Activated naive CD4-positive, alpha-beta T cell treated with anti-CD3 and anti-CD28 coated beads for 36 hours (primary cell): ENCODE measurements at regions of chr3 and their contacts with region 1.

Region 1: GRCh38 chr3:193788189-193788991 is 195.4 kb downstream of the OPA1 start:
- DNase-seq: peak; percentile 49
- H3K4me3 Mint-ChIP-seq: no peak overlapping the region
- H3K27ac Mint-ChIP-seq: no peak overlapping the region
- H3K4me1 Mint-ChIP-seq: no peaks in the 10 kb centered on the region
- H3K27me3 Mint-ChIP-seq: peaks cover 7% of the 10 kb centered on the region

Region 2: GRCh38 chr3:193389335-193389734 is 399.1 kb before region 1 on chr3:
- CTCF ChIA-PET with region 1: no interaction called
- intact Hi-C with region 1: no loop called
- DNase-seq: no peak
- H3K4me3 Mint-ChIP-seq: no peak overlapping the region
- H3K27ac Mint-ChIP-seq: no peak overlapping the region
- H3K4me1 Mint-ChIP-seq: no peaks in the 10 kb centered on the region
- H3K27me3 Mint-ChIP-seq: peaks cover 13% of the 10 kb centered on the region

Region 3: DNA sequence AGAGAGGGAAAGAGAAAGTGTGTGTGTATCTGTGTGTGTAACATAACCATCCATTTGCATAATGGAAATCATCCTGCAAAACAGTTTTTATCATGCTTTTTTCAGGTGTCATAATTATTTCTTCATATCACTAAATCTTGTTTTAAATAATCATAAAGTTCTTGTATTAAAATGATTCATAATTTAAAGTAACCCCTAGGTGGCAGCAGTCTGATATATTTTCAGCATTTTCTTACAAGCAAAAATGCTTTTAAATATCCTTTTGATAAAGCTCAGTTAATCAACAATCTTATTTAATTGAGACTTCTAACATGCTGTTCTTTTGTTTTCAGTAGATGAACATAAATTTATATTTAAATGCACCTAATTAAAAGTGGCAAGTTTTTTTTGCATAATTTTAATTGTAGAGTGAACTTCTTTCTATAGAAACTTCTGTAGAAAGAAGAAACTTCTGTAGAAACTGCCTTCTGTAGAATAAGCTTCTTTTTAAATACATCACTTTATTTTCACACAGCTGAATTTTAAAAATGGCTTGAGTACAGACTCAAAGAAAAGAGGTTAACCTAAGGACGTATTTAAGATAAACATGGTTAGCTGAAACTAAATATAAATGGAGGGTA is 122.9 kb before region 1 on chr3:
- CTCF ChIA-PET with region 1: no interaction called
- intact Hi-C with region 1: loop called (anchors 5 kb)
- DNase-seq: no peak
- H3K4me3 Mint-ChIP-seq: no peak overlapping the region
- H3K27ac Mint-ChIP-seq: no peak overlapping the region
- H3K4me1 Mint-ChIP-seq: no peaks in the 10 kb centered on the region
- H3K27me3 Mint-ChIP-seq: no peaks in the 10 kb centered on the region

Region 4: DNA sequence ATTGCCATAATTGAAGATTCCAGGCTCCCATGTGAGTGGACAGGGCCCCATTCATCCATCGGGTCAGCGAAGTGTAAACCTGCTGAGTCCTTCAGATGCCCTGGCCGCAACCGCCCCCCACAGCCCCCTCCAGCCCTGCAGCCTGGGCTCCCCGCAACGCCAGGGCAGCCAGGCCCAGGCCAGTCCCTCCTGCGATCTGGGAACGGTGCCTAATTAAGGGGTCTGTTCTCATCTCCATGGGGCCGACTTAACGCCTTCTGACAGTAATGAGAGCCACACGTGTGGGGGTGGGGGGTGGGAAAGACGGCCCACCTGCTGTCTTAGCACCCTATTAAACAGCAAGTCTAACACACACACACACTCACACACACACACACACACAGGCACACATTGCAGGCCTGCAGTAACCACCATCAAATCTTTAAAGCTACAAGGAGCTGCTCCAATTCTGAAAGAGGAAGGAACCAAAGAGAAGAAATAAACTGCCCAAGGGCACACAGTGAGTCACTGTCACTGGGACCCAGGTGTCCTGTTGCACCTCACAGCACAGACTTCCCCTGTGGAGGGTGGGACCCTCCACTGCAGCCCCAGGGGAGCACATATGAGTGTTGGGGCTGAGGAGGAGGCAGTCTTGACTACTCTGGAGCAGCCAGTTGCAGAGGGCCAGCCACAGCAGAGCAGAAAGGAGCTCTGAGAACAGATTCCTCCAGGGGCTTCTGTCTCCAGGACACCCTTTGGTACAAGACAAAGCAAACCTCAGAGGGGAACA is 315.8 kb after region 1 on chr3:
- CTCF ChIA-PET with region 1: interaction called, 3 read pairs
- intact Hi-C with region 1: loop called (anchors 1 kb)
- DNase-seq: no peak
- H3K4me3 Mint-ChIP-seq: no peak overlapping the region
- H3K27ac Mint-ChIP-seq: no peak overlapping the region
- H3K4me1 Mint-ChIP-seq: peaks cover 13% of the 10 kb centered on the region
- H3K27me3 Mint-ChIP-seq: peaks cover under 1% of the 10 kb centered on the region